ENCODE measurements at regions of chr4 and their contacts with region 1.

Region 1: DNA sequence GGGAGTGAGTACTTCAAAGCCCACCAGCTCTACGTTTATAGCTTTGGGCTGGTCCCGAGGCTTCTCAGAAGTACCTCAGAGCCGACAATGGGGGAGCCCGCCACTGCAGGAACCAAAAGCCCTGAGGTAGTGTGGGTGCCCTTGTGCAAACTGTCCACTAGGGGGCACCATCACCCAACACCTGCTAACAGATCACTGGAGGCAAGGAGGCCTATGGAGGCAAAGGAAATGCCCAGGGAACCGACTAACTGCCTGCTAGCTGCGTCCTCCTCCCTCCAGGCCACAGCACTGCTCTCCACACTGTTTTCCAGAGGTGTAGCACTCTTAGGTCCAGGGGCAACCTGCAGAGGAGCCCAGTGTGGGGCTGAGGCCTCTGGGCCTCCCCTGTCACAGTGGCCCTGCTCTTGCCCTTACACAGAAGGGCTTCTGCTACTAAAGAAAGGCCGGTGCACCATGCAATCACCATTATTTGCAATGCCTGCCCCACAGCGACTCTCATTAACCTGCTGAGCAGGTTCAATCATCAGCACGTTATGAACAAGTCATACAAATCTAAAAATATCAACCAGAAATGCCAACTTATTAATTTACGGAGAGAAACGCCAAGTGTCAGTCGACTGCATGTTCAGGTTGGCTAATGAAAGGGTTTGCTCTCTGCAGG is 159.1 kb downstream of the NSUN7 start:
- DNase-seq: peak; percentile 89
- H3K4me3 Mint-ChIP-seq: peak overlapping the region; percentile 22
- H3K27ac Mint-ChIP-seq: peak overlapping the region; percentile 90
- H3K4me1 Mint-ChIP-seq: peaks cover 41% of the 10 kb centered on the region
- H3K27me3 Mint-ChIP-seq: no peaks in the 10 kb centered on the region

Region 2: GRCh38 chr4:40316782-40317635 is 591.8 kb before region 1 on chr4:
- CTCF ChIA-PET with region 1: no interaction called
- intact Hi-C with region 1: loop called (anchors 1 kb)
- DNase-seq: peak; percentile 71
- H3K4me3 Mint-ChIP-seq: peak overlapping the region; percentile 86
- H3K27ac Mint-ChIP-seq: peak overlapping the region; percentile 100
- H3K4me1 Mint-ChIP-seq: peaks cover 49% of the 10 kb centered on the region
- H3K27me3 Mint-ChIP-seq: no peaks in the 10 kb centered on the region

Region 3: DNA sequence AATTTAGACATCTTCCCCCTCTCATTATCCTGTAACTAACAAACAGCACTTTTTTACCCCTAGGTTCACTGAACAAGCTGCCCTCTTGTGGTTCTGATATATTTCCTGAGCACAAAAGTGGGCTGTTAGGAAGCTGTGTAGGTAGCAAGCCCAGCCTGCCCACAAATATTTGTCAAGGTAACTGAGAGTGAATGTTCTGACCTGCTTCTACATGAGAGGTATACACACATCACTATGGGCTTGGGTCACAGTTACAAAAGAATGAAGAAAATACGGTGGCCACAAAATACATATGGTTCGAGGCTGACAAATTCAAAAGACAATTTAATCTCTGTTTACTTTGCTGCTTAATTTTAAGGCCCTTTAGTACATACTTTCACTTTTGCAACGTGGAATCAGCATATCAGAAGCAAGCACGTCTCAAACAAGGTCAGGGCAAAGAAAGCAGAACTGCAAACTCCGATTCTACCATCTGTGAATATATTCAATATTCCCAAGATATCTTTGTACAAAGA is 357.8 kb before region 1 on chr4:
- CTCF ChIA-PET with region 1: no interaction called
- intact Hi-C with region 1: loop called (anchors 5 kb)
- DNase-seq: peak; percentile 34
- H3K4me3 Mint-ChIP-seq: peak overlapping the region; percentile 60
- H3K27ac Mint-ChIP-seq: peak overlapping the region; percentile 55
- H3K4me1 Mint-ChIP-seq: peaks cover 28% of the 10 kb centered on the region
- H3K27me3 Mint-ChIP-seq: no peaks in the 10 kb centered on the region

Region 4: GRCh38 chr4:40699648-40700047 is 209.2 kb before region 1 on chr4:
- CTCF ChIA-PET with region 1: no interaction called
- intact Hi-C with region 1: no loop called
- DNase-seq: no peak
- H3K4me3 Mint-ChIP-seq: no peak overlapping the region
- H3K27ac Mint-ChIP-seq: no peak overlapping the region
- H3K4me1 Mint-ChIP-seq: peaks cover 17% of the 10 kb centered on the region
- H3K27me3 Mint-ChIP-seq: no peaks in the 10 kb centered on the region

Region 5: GRCh38 chr4:40763228-40763716 is 145.6 kb before region 1 on chr4:
- CTCF ChIA-PET with region 1: no interaction called
- intact Hi-C with region 1: loop called (anchors 1 kb)
- DNase-seq: peak; percentile 71
- H3K4me3 Mint-ChIP-seq: no peak overlapping the region
- H3K27ac Mint-ChIP-seq: peak overlapping the region; percentile 8
- H3K4me1 Mint-ChIP-seq: peaks cover 11% of the 10 kb centered on the region
- H3K27me3 Mint-ChIP-seq: peaks cover 2% of the 10 kb centered on the region

Region 6: GRCh38 chr4:41060352-41061334 is 151.8 kb after region 1 on chr4:
- CTCF ChIA-PET with region 1: no interaction called
- intact Hi-C with region 1: no loop called
- DNase-seq: no peak
- H3K4me3 Mint-ChIP-seq: no peak overlapping the region
- H3K27ac Mint-ChIP-seq: no peak overlapping the region
- H3K4me1 Mint-ChIP-seq: no peaks in the 10 kb centered on the region
- H3K27me3 Mint-ChIP-seq: peaks cover 3% of the 10 kb centered on the region

Region 7: GRCh38 chr4:41214136-41214824 is 305.4 kb after region 1 on chr4 and contains the start of gene APBB2:
- CTCF ChIA-PET with region 1: interaction called, 5 read pairs
- intact Hi-C with region 1: loop called (anchors 1 kb)
- DNase-seq: peak; percentile 66
- H3K4me3 Mint-ChIP-seq: peak within 1 kb of the TSS; percentile 79
- H3K27ac Mint-ChIP-seq: no peak within 1 kb of the TSS
- H3K4me1 Mint-ChIP-seq: peaks cover 22% of the 10 kb centered on the region
- H3K27me3 Mint-ChIP-seq: peaks cover 47% of the 10 kb centered on the region
- total RNA-seq, gene APBB2: 4.5 to 4.8 TPM

Measured in activated naive CD4-positive, alpha-beta T cell treated with anti-CD3 and anti-CD28 coated beads for 36 hours (primary cell).